CD4-positive, alpha-beta memory T cell (primary cell): ENCODE measurements at regions of chr12 and their contacts with region 1.

Region 1: DNA sequence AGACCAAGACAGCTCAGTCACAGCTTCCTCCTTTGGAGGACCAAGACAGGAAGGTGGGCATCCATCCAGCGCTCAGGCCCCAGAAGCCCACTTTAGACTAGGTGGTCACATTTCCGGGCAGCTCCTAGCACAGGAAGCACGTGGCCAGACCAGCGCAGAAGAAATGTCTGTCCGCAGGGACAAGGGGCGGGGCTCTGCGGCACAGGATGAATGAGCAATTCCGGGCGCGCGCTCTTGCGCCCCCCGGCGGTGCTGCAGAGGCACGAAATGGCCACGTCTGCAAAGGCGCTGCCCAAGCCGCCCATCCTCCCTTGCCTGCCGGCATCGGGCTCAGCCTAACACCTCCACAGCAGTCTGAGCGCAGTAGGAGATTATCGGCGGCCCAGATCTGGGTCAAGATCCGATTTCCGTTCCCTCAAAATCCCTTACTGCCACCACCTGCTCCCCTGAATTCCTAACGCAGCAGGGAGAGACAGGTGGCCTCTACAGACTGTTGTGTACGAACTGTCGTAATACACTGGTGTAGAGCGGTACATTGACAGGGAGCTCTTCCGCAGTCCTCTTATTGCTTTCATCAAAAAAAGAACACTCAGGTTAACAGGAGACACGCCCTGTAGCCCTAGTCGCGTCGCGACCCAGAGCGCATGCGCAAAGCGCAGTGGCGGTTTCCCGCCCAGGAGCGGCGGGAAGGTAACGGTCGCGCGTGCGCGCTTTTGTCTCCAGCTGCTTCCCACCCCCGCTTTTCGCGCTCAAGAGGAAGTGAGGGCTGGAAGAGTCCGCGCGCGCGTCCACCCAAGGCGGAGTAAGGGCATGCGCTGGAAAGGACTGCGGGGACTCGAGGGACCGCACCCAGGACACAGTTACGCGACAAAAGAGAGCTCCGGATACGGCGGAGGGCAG is 794 bp downstream of the TUBA1B start:
- DNase-seq: peak; percentile 93 to 95 (median 94)
- H3K4me3 ChIP-seq: peak overlapping the region; percentile 94 to 97
- H3K4me3 Mint-ChIP-seq: peak overlapping the region; percentile 97 to 99 (median 98)
- H3K27ac ChIP-seq: peak overlapping the region; percentile 94
- H3K27ac Mint-ChIP-seq: peak overlapping the region; percentile 98 to 99 (median 99)
- H3K4me1 ChIP-seq: peaks cover 42% of the 10 kb centered on the region
- H3K4me1 Mint-ChIP-seq: peaks cover 24 to 63% (median 36%) of the 10 kb centered on the region in 4 donors
- H3K27me3 ChIP-seq: no peaks in the 10 kb centered on the region
- H3K27me3 Mint-ChIP-seq: no peaks in the 10 kb centered on the region

Region 2: DNA sequence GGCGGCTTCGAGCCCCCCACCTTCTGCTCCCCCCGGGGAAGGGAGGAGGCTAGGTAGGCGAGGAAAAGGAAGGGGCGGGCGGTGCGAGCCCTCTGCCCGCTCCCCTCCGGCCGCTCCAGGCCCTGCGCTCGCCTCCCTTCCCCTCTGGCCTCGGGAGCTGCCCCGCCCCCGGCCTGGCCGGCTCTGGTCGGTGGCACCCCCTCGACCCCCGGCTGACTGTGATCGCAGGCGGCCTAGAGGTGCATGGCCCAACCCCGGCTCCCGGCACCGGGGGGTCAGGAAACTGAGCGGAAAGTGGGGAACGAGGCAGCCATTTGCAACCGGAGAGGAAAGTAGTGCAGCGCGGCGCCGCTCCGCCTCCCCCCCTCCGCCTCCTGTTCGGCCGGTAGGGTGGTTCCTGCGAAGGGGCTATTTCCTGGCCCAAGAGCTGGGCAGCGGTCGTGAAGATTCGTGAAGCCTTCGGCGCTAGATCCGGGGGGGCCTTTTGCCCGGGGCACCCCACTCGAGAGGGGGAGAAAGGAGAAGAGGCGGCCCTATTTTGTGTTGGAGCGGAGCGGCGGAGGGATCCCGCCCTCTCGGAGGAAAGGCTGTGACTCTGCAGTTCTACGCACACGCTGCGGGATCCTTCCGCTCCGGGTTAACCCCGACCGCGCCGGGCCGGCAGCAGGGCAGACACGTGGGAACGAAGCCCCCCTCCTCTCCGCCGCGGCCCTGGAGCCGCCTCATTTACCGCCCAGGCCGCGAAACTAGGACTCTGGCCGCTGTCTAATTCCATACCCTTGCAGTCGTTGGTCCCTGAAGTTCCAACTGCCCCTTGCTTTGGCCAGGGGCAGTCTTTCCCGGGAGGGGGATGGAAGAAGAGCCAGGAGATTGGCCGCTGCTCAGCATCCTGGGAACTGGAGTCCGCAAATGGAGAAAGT is 69.9 kb before region 1 on chr12 and contains the start of gene KMT2D:
- CTCF ChIA-PET with region 1: interaction called, 15 read pairs
- POLR2A ChIA-PET with region 1: interaction called, 16 read pairs
- intact Hi-C with region 1: loop called (anchors 2 kb)
- DNase-seq: peak; percentile 89 to 93 (median 92)
- H3K4me3 ChIP-seq: peak within 1 kb of the TSS; percentile 93 to 97
- H3K4me3 Mint-ChIP-seq: peak within 1 kb of the TSS; percentile 94 to 96 (median 95)
- H3K27ac ChIP-seq: peak within 1 kb of the TSS; percentile 90
- H3K27ac Mint-ChIP-seq: peak within 1 kb of the TSS; percentile 95 to 99 (median 98)
- H3K4me1 ChIP-seq: peaks cover 47% of the 10 kb centered on the region
- H3K4me1 Mint-ChIP-seq: peaks cover 43 to 60% (median 49%) of the 10 kb centered on the region in 4 donors
- H3K27me3 ChIP-seq: no peaks in the 10 kb centered on the region
- H3K27me3 Mint-ChIP-seq: no peaks in the 10 kb centered on the region
- total RNA-seq, gene KMT2D: 133 to 159 TPM

Region 3: DNA sequence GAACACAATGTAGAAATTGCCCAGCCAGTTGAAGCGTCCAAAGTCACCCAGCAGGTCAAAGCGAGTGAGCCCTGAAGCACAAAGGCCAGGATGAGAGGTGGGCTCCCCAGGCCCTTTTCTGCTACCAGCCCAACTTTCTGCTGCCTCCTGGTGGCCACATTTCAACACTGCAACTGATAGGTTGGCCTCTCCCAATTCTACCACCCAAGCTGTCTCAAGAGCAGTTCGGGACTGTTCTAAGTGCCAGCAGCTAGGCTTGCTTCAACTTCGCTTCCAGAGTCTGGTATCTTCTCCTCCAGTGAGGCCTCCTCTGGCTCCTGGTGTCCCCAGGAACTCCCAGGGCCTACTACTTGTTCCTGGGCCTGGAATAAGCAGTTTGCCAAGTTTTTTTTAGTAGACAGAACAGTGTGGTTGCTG is 32.4 kb before region 1 on chr12:
- CTCF ChIA-PET with region 1: interaction called, 51 read pairs
- POLR2A ChIA-PET with region 1: interaction called, 38 read pairs
- intact Hi-C with region 1: no loop called
- DNase-seq: peak; percentile 49 to 63 (median 58)
- H3K4me3 ChIP-seq: no peak overlapping the region
- H3K4me3 Mint-ChIP-seq: peak overlapping the region in 1 of 8 donors; percentile 15
- H3K27ac ChIP-seq: no peak overlapping the region
- H3K27ac Mint-ChIP-seq: peak overlapping the region in 2 of 7 donors; percentile 15 to 51
- H3K4me1 ChIP-seq: peaks cover 18% of the 10 kb centered on the region
- H3K4me1 Mint-ChIP-seq: peaks cover 11 to 27% (median 16%) of the 10 kb centered on the region in 4 donors
- H3K27me3 ChIP-seq: peaks cover 20% of the 10 kb centered on the region
- H3K27me3 Mint-ChIP-seq: peaks cover 7 to 18% of the 10 kb centered on the region in 2 donors

Region 4: GRCh38 chr12:49188914-49189367 is 58.5 kb after region 1 on chr12 and contains the start of gene TUBA1A:
- CTCF ChIA-PET with region 1: interaction called, 52 read pairs
- POLR2A ChIA-PET with region 1: interaction called, 394 read pairs
- intact Hi-C with region 1: loop called (anchors 1 kb)
- DNase-seq: peak; percentile 96 to 99 (median 98)
- H3K4me3 ChIP-seq: peak within 1 kb of the TSS; percentile 84 to 97
- H3K4me3 Mint-ChIP-seq: peak within 1 kb of the TSS; percentile 95 to 99 (median 98)
- H3K27ac ChIP-seq: peak within 1 kb of the TSS; percentile 95
- H3K27ac Mint-ChIP-seq: peak within 1 kb of the TSS; percentile 96 to 100 (median 99)
- H3K4me1 ChIP-seq: peaks cover 17% of the 10 kb centered on the region
- H3K4me1 Mint-ChIP-seq: peaks cover 12 to 35% (median 25%) of the 10 kb centered on the region in 4 donors
- H3K27me3 ChIP-seq: no peaks in the 10 kb centered on the region
- H3K27me3 Mint-ChIP-seq: no peaks in the 10 kb centered on the region
- total RNA-seq, gene TUBA1A: 97.5 to 102 TPM

Region 5: GRCh38 chr12:49264738-49265515 is 134.5 kb after region 1 on chr12 and contains the start of gene TUBA1C:
- CTCF ChIA-PET with region 1: no interaction called
- POLR2A ChIA-PET with region 1: interaction called, 43 read pairs
- intact Hi-C with region 1: loop called (anchors 10 kb)
- DNase-seq: peak; percentile 80 to 84 (median 82)
- H3K4me3 ChIP-seq: peak within 1 kb of the TSS; percentile 65 to 96
- H3K4me3 Mint-ChIP-seq: peak within 1 kb of the TSS; percentile 90 to 99 (median 96)
- H3K27ac ChIP-seq: peak within 1 kb of the TSS; percentile 74
- H3K27ac Mint-ChIP-seq: peak within 1 kb of the TSS; percentile 92 to 98 (median 94)
- H3K4me1 ChIP-seq: peaks cover 36% of the 10 kb centered on the region
- H3K4me1 Mint-ChIP-seq: peaks cover 8 to 42% (median 23%) of the 10 kb centered on the region in 4 donors
- H3K27me3 ChIP-seq: no peaks in the 10 kb centered on the region
- H3K27me3 Mint-ChIP-seq: no peaks in the 10 kb centered on the region
- total RNA-seq, gene TUBA1C: 50.6 to 51.2 TPM